ENCODE measurements at regions of chr3 and their contacts with region 1.

Region 1: GRCh38 chr3:81666493-81667121 is 94.8 kb downstream of the GBE1 start:
- DNase-seq: no peak
- ATAC-seq: peak in 1 of 8 donors; percentile 53
- H3K4me3 ChIP-seq: no peak overlapping the region
- H3K27ac ChIP-seq: no peak overlapping the region
- H3K4me1 ChIP-seq: peaks cover 0 to 30% (median 13%) of the 10 kb centered on the region in 9 donors
- H3K27me3 ChIP-seq: no peaks in the 10 kb centered on the region
- CTCF ChIP-seq: peak; percentile 38 to 86 (median 81)

Region 2: GRCh38 chr3:81723732-81724313 is 57.2 kb after region 1 on chr3:
- intact Hi-C with region 1: loop called in 1 of 10 experiments (anchors 10 kb)
- DNase-seq: no peak
- ATAC-seq: peak; percentile 68 to 81 (median 76)
- H3K4me3 ChIP-seq: peak overlapping the region in 3 of 10 donors; percentile 4 to 25 (median 16)
- H3K27ac ChIP-seq: peak overlapping the region in 8 of 10 donors; percentile 19 to 77 (median 56)
- H3K4me1 ChIP-seq: peaks cover 0 to 60% (median 30%) of the 10 kb centered on the region in 9 donors
- H3K27me3 ChIP-seq: no peaks in the 10 kb centered on the region
- CTCF ChIP-seq: no peak

Region 3: DNA sequence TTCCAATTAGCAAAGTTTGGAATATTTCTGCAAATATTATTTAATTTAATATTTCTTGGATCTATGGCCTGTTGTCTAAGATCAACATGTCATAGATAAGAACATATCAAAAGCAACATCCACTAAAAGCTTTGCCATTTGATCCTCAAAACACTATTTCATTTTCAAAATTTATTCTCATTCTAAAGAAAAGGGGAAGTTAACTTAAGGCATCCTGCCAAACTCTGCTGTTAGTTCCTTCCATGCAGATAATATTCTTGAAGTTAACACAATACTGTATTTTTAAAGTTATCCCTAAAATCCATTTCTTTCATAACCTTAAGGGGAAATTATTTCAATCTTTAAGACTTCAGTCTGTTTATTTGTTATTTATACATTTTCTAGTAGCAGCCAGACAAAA is 123.1 kb after region 1 on chr3:
- intact Hi-C with region 1: loop called in 1 of 10 experiments (anchors 5 kb)
- DNase-seq: no peak
- ATAC-seq: no peak
- H3K4me3 ChIP-seq: no peak overlapping the region
- H3K27ac ChIP-seq: peak overlapping the region in 9 of 10 donors; percentile 28 to 80 (median 71)
- H3K4me1 ChIP-seq: peaks cover 0 to 31% (median 18%) of the 10 kb centered on the region in 9 donors
- H3K27me3 ChIP-seq: no peaks in the 10 kb centered on the region
- CTCF ChIP-seq: no peak

Region 4: DNA sequence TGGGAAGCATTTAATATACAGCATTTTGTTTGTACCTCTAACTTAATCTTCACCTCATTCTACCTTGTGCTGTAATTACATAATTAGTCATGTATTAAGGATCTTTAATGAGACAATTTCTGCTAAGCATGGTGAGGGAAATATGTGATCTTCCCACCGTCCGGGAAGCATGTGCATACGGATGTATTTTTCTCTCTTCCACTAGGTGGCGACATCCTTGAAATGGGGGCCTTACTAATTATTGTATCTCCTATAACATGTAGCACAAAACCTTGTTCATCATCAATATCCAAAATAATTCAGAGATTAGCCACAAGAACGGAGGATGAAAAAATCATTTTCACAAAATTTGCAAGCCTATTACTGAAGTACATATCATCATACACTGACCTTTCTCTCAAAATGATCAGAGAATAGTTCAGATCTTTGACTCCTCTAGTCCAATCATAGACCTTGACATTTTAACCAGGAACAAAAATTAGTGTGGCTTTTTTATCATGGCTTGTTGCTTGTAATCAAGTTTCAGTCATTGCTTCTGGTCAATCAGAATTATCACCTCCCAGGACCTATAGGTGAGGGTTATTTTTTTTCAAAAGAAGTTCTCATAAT is 243.7 kb after region 1 on chr3:
- intact Hi-C with region 1: loop called in 2 of 10 experiments (anchors 5 to 10 kb)
- DNase-seq: peak in 1 of 2 donors; percentile 16
- ATAC-seq: peak in 1 of 8 donors; percentile 39
- H3K4me3 ChIP-seq: no peak overlapping the region
- H3K27ac ChIP-seq: no peak overlapping the region
- H3K4me1 ChIP-seq: peaks cover 0 to 4% (median 0%) of the 10 kb centered on the region in 9 donors
- H3K27me3 ChIP-seq: no peaks in the 10 kb centered on the region
- CTCF ChIP-seq: peak; percentile 72 to 84 (median 77)

Region 5: GRCh38 chr3:81920816-81921215 is 254.2 kb after region 1 on chr3:
- intact Hi-C with region 1: loop called in 2 of 10 experiments (anchors 10 kb)
- DNase-seq: no peak
- ATAC-seq: no peak
- H3K4me3 ChIP-seq: no peak overlapping the region
- H3K27ac ChIP-seq: no peak overlapping the region
- H3K4me1 ChIP-seq: peaks cover 0 to 8% (median 0%) of the 10 kb centered on the region in 9 donors
- H3K27me3 ChIP-seq: no peaks in the 10 kb centered on the region
- CTCF ChIP-seq: no peak

Measured in heart right ventricle (tissue), 16 donors.